ENCODE measurements at regions of chr6 and their contacts with region 1.

Region 1: GRCh38 chr6:35683267-35683666 is 5.4 kb downstream of the FKBP5 start:
- DNase-seq: no peak
- ATAC-seq: no peak
- H3K4me3 ChIP-seq: no peak overlapping the region
- H3K27ac ChIP-seq: no peak overlapping the region
- H3K4me1 ChIP-seq: peaks cover 11% of the 10 kb centered on the region; the same call in 1 of the 2 replicates
- H3K27me3 ChIP-seq: no peaks in the 10 kb centered on the region
- CTCF ChIP-seq: no peak

Region 2: DNA sequence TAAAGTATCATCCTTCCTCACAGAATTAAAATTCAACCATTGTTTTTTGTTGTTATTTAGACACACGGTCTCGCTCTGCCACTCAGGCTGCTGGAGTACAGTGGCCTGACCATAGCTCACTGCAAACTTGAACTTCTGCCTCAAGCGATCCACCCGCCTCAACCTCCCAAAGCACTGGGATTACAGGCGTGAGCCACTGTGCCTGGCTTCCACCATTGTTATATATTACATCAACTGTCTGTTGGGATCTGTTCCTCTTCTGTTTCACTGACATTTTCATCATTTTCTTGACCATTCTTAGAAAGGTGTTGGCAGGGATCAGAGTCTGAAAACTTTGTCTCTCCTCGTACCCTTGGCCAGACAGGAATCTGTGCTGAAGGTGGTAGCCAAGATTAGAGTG is 149.3 kb before region 1 on chr6:
- CTCF ChIA-PET with region 1: no interaction called
- POLR2A ChIA-PET with region 1: no interaction called
- in situ Hi-C with region 1: no loop called
- intact Hi-C with region 1: no loop called
- DNase-seq: no peak
- ATAC-seq: no peak
- H3K4me3 ChIP-seq: no peak overlapping the region
- H3K27ac ChIP-seq: no peak overlapping the region
- H3K4me1 ChIP-seq: no peaks in the 10 kb centered on the region
- H3K27me3 ChIP-seq: no peaks in the 10 kb centered on the region
- CTCF ChIP-seq: no peak

Region 3: GRCh38 chr6:35602133-35602946 is 80.9 kb before region 1 on chr6:
- CTCF ChIA-PET with region 1: interaction called, 10 read pairs
- POLR2A ChIA-PET with region 1: no interaction called
- in situ Hi-C with region 1: no loop called
- intact Hi-C with region 1: no loop called
- DNase-seq: no peak
- ATAC-seq: no peak
- H3K4me3 ChIP-seq: no peak overlapping the region
- H3K27ac ChIP-seq: no peak overlapping the region
- H3K4me1 ChIP-seq: 0 out of 2 replicates have a peak, but pooled peaks cover 3% of the 10 kb centered on the region
- H3K27me3 ChIP-seq: no peaks in the 10 kb centered on the region
- CTCF ChIP-seq: no peak

Measured in Panc1 (cell line).